Aorta (tissue), 5 donors: ENCODE measurements at regions of chr13 and their contacts with region 1.

Region 1: DNA sequence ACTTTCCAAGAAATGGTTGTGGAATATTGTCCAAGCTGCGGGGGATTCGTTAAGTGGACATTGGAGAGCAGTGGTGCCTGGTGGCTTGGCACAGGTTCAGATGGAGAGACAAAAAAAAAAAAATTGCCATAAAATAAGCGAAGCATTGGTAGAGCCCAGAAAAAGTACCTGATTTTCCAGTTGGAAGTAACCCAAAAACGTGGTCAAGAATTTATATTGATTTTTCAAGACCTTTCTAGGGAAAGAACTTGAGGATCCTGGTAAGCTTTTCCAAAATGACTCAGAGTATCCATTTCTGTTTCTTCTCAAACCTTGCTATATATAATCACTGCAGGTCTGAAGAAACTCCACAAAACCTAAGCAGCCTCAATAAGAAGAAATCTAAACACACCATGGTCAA is 94.6 kb downstream of the ING1 start:
- DNase-seq: no peak
- ATAC-seq: no peak
- H3K4me3 ChIP-seq: no peak overlapping the region
- H3K27ac ChIP-seq: no peak overlapping the region
- H3K4me1 ChIP-seq: no peaks in the 10 kb centered on the region
- H3K27me3 ChIP-seq: peaks cover 0 to 4% of the 10 kb centered on the region in 2 donors

Region 2: GRCh38 chr13:110715395-110716235 is 92.5 kb before region 1 on chr13:
- intact Hi-C with region 1: loop called (anchors 5 to 10 kb)
- DNase-seq: peak; percentile 98 to 99
- ATAC-seq: peak; percentile 86
- H3K4me3 ChIP-seq: peak overlapping the region; percentile 59 to 64
- H3K27ac ChIP-seq: peak overlapping the region; percentile 2 to 85
- H3K4me1 ChIP-seq: no peaks in the 10 kb centered on the region
- H3K27me3 ChIP-seq: no peaks in the 10 kb centered on the region